Activated CD4-positive, alpha-beta memory T cell treated with anti-CD3 and anti-CD28 coated beads for 36 hours (primary cell): ENCODE measurements at regions of chr11 and their contacts with region 1.

Region 1: GRCh38 chr11:35391922-35392813 is 27.2 kb downstream of the SLC1A2 start:
- DNase-seq: peak; percentile 89
- H3K4me3 Mint-ChIP-seq: no peak overlapping the region
- H3K27ac Mint-ChIP-seq: no peak overlapping the region
- H3K4me1 Mint-ChIP-seq: peaks cover 29% of the 10 kb centered on the region
- H3K27me3 Mint-ChIP-seq: peaks cover 4% of the 10 kb centered on the region

Region 2: DNA sequence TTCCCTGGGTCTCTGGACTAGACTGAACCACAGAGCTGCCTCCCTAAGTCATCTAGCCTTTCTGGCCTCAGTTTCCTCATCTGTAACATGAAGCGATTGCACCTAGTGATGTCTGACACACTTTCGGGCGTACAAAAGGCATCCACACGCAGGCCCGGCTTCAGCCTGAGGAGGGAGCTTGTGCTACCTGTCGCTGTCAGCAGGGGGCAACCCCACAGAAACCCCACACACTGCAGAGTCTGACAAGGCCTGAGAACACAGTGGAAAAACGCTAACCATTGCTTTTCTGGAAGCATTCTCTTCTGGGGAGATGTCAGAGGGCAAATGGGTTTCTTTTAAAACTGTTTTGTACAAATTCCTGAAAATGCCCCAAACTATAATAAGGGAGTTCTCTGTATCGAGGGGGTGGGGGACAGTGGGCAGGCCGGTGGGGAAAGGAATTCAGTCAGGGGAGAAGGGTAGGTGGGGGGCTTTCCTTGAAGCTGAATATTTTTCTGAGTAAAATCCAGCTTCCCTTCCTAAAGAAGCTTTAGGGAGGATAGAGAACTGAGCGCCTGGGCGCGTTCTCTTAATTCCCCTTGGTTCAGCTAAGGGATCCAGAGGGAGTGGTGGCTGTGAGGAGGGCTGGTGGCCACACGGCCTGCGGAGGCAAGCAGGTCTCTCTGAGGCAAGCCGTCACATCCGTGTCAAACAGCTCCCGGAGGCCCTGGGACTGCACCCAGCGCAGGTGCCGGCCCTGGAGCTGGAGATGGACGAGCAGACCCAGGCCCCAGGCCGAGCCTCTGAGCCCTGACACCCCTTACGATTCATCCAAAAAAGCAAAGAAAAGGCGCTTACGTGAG is 879.1 kb before region 1 on chr11:
- CTCF ChIA-PET with region 1: no interaction called
- POLR2A ChIA-PET with region 1: no interaction called
- intact Hi-C with region 1: loop called (anchors 5 kb)
- DNase-seq: peak; percentile 71
- H3K4me3 Mint-ChIP-seq: no peak overlapping the region
- H3K27ac Mint-ChIP-seq: no peak overlapping the region
- H3K4me1 Mint-ChIP-seq: no peaks in the 10 kb centered on the region
- H3K27me3 Mint-ChIP-seq: no peaks in the 10 kb centered on the region

Region 3: GRCh38 chr11:34840736-34841386 is 551.3 kb before region 1 on chr11:
- CTCF ChIA-PET with region 1: interaction called, 5 read pairs
- POLR2A ChIA-PET with region 1: no interaction called
- intact Hi-C with region 1: loop called (anchors 5 kb)
- DNase-seq: peak; percentile 33
- H3K4me3 Mint-ChIP-seq: no peak overlapping the region
- H3K27ac Mint-ChIP-seq: no peak overlapping the region
- H3K4me1 Mint-ChIP-seq: no peaks in the 10 kb centered on the region
- H3K27me3 Mint-ChIP-seq: peaks cover 7% of the 10 kb centered on the region

Region 4: DNA sequence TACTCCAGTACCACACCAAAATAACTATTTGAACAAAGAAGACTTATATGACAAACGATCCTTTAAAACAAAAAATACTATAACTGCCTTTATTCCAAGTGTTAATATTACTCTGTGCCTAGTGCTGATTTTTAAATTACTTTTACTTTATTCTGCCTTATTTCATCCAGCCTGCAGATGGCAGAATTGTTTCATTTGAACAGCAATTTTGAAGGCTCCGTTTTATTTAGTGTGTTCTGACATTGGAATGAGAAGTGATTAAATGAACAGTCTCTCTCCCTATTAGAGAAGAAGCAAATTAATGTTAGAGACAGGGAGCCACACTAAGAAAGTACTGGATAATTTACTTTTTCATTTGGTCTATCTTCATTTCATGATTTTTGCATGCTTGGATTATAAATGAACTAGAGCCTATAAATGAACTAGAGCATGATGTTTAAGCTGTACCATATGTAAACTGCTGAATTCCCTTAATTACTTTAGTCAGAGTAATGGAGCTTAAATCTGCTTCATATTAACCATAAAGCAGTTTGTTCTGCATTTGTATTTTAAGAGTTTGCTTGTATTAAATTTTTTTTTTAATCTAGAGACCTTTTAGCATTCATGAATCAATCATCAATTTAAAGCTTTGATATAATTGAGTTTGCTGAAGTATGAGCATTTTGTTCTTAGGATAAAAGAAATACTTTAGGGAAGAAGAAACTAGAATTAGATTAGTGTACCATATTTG is 465.9 kb before region 1 on chr11:
- CTCF ChIA-PET with region 1: interaction called, 151 read pairs
- POLR2A ChIA-PET with region 1: no interaction called
- intact Hi-C with region 1: loop called (anchors 1 kb)
- DNase-seq: no peak
- H3K4me3 Mint-ChIP-seq: no peak overlapping the region
- H3K27ac Mint-ChIP-seq: no peak overlapping the region
- H3K4me1 Mint-ChIP-seq: peaks cover 16% of the 10 kb centered on the region
- H3K27me3 Mint-ChIP-seq: no peaks in the 10 kb centered on the region

Region 5: GRCh38 chr11:35173011-35173511 is 219.1 kb before region 1 on chr11:
- CTCF ChIA-PET with region 1: interaction called, 11 read pairs
- POLR2A ChIA-PET with region 1: no interaction called
- intact Hi-C with region 1: loop called (anchors 1 kb)
- DNase-seq: no peak
- H3K4me3 Mint-ChIP-seq: peak overlapping the region; percentile 40
- H3K27ac Mint-ChIP-seq: peak overlapping the region; percentile 82
- H3K4me1 Mint-ChIP-seq: peaks cover 95% of the 10 kb centered on the region
- H3K27me3 Mint-ChIP-seq: no peaks in the 10 kb centered on the region

Region 6: GRCh38 chr11:35337136-35337918 is 54.8 kb before region 1 on chr11:
- CTCF ChIA-PET with region 1: interaction called, 3 read pairs
- POLR2A ChIA-PET with region 1: no interaction called
- intact Hi-C with region 1: loop called (anchors 1 kb)
- DNase-seq: peak; percentile 35
- H3K4me3 Mint-ChIP-seq: no peak overlapping the region
- H3K27ac Mint-ChIP-seq: peak overlapping the region; percentile 56
- H3K4me1 Mint-ChIP-seq: peaks cover 40% of the 10 kb centered on the region
- H3K27me3 Mint-ChIP-seq: peaks cover 2% of the 10 kb centered on the region

Region 7: DNA sequence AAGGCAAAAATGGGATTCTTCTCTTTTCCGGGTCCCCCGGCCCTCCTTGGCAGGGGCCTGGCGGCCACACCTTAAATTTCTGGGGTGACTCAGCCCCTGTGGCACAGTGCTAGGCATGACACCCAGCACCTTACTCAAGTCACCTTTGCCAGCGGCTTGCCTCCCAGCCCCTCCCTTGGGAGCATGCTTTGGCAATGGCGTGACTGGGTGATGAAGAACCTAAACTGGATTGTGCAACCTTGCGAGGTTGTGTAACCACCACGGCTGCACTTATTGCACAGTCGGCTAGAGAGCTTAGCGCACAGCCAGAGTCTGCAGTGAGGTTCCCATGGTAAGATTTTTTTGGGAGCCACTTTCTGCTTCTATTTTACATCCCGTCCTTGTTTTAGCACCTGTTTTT is 535.6 kb after region 1 on chr11:
- CTCF ChIA-PET with region 1: no interaction called
- POLR2A ChIA-PET with region 1: no interaction called
- intact Hi-C with region 1: no loop called
- DNase-seq: no peak
- H3K4me3 Mint-ChIP-seq: no peak overlapping the region
- H3K27ac Mint-ChIP-seq: no peak overlapping the region
- H3K4me1 Mint-ChIP-seq: no peaks in the 10 kb centered on the region
- H3K27me3 Mint-ChIP-seq: peaks cover 6% of the 10 kb centered on the region